Adrenal gland (tissue), 19 donors: ENCODE measurements at regions of chr2 and their contacts with region 1.

Region 1: DNA sequence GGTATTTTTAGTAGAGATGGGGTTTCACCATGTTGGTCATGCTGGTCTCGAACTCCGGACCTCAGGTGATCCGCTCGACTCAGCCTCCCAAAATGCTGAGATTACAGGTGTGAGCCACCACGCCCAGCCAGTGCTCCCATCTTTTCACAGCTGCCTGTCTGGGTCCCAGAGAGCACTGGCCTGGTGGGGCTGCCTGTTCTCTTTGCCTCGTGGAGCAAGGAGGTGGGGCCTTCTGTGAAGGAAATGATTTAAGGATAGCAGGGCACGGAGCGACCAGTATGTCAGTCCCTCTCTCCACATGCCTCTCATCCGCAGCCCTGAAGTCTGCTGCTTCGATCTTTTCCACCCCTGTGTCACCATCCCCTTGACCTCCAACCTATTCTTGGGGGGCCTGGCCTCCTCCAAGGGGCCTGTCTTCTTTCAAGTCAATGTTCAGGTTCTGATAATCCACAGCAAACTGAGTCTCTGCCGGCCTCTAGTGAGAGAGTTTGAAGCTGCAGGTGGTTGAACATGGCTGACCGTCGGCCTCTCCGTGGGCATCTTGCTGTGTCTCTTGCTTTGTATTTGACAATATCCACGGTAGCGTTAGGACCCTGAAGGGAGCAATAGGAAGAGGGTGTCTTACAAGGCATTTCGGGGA is 28.2 kb upstream of the GIGYF2 start:
- DNase-seq: peak in 6 of 7 donors; percentile 22 to 66 (median 40)
- H3K4me3 ChIP-seq: no peak overlapping the region
- H3K27ac ChIP-seq: no peak overlapping the region
- H3K4me1 ChIP-seq: no peaks in the 10 kb centered on the region
- H3K27me3 ChIP-seq: no peaks in the 10 kb centered on the region
- CTCF ChIP-seq: peak; percentile 23 to 60 (median 54)
- POLR2A ChIP-seq: no peak

Region 2: DNA sequence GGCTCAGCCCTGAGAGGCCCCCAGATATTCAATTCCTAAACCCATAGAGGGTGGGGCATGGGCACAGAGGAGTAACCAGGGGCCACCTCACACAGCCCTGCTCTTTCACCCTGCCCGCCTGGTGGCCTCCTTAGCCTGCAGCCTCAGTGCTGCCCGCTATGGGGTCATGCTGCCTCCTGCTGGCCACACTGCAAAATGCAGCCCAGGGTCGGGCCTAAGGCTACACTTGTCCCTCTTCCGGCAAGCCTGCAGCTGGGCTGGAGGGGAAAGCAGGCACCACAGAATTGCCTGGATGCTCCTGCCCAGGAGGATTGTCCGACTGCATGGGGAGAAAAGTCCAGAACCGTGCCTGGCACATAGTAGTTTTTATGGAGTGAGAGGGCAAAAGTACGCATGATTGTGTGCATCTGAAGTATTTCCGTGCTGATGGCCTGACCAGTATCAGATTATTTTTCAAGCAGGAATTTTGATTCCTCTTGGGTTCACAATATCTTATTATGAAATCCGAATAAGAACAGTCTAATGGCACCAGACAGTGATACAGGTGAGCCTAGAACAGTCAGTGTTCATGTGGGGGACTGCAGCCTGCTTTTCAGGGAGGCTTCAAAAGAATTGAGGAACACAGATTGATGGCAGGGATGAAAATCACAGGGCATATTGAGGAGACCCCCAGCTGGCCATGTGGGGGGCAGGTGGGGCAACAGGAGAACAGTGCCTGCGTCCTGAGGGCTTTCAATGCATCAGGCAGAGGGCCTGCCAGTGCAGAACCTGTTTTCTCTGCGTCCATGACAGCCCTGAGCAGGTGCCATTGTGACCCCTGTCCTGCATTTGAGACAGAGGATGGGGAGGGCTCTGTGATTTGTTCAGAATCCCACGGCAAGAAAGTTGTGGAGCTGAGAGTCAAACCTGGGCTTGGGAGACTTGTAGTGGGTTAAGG is 341.6 kb before region 1 on chr2:
- intact Hi-C with region 1: no loop called
- DNase-seq: peak; percentile 56 to 86 (median 71)
- H3K4me3 ChIP-seq: no peak overlapping the region
- H3K27ac ChIP-seq: no peak overlapping the region
- H3K4me1 ChIP-seq: no peaks in the 10 kb centered on the region
- H3K27me3 ChIP-seq: no peaks in the 10 kb centered on the region
- CTCF ChIP-seq: peak; percentile 74 to 96 (median 92)
- POLR2A ChIP-seq: no peak

Region 3: GRCh38 chr2:232611551-232612218 is 57.2 kb before region 1 on chr2:
- intact Hi-C with region 1: loop called (anchors 5 kb)
- DNase-seq: peak; percentile 37 to 81 (median 66)
- H3K4me3 ChIP-seq: no peak overlapping the region
- H3K27ac ChIP-seq: no peak overlapping the region
- H3K4me1 ChIP-seq: no peaks in the 10 kb centered on the region
- H3K27me3 ChIP-seq: no peaks in the 10 kb centered on the region
- CTCF ChIP-seq: peak; percentile 58 to 80 (median 78)
- POLR2A ChIP-seq: no peak

Region 4: DNA sequence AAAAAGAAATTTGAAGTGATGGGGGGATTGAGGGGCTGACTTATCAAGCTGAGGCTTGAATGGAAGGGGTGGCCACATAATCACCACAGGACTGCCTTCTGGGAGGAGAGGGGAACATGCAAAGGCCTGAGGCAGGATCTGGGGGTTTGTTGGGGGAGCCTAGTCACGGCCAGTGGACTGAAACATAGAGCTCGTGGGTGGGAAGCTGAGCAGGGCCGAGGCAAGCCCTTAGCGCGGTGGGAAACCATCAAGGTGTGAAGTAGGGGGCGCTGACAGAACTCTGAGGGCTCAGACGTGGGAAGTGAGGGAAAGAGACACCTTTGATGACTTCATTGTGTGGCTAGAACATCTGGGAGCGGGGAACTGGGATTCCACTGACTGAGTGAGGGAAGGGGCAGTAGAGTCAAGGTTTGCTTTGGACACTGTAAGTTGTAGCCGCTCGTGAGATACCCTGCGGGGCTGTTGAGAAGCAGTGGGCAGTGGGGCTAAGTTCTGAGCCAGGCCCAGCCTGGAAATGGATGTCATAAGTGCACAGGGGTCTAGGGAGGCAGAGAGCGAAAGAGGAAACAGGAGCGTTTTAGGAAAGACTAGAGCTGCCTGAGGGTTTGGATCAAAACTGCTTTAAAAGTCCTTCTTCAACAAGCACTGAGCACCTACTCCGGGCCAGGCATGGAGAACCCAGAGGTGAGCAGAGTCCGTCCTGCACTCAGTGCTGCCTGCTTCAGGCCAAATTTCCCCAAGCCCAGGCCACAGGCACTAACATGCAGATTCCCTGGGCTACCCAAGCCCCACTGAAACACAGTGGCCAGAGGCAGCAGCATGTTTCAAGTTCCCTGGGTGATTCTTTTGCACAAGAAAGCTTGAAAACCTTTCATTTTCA is 200.5 kb after region 1 on chr2:
- intact Hi-C with region 1: no loop called
- DNase-seq: peak in 2 of 7 donors; percentile 16 to 39
- H3K4me3 ChIP-seq: no peak overlapping the region
- H3K27ac ChIP-seq: no peak overlapping the region
- H3K4me1 ChIP-seq: no peaks in the 10 kb centered on the region
- H3K27me3 ChIP-seq: no peaks in the 10 kb centered on the region
- CTCF ChIP-seq: no peak
- POLR2A ChIP-seq: no peak